ENCODE measurements at regions of chr12 and their contacts with region 1.

Region 1: GRCh38 chr12:52023182-52023975 is 16.6 kb downstream of the TAMALIN start:
- DNase-seq: peak; percentile 76 to 98 (median 85)

Region 2: DNA sequence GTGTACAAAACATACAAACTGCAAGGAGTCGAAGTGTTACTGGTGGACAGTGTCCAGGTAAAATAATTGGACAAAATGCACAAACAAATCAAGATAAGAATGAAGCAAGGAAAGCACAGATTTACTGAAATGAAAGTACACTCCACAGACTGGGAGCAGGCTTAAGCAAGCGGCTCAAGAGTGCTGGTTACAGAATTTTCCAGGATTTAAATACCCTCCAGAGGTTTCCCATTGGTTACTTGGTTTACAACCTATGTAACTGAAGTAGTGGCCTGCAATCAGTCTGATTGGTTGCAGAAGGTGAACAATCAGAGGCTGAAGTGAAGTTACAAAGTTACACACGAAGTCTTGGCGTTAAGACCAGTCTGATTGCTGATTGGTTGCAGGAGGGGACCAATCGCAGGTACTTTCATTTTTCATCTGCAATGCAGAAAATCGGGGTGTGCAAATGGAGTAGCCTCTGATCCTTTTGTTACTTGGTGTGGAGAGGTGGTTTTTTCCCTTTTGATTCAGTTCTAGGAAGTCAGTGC is 444.0 kb before region 1 on chr12:
- intact Hi-C with region 1: no loop called
- DNase-seq: no peak

Region 3: GRCh38 chr12:51994959-51995358 is 28.4 kb before region 1 on chr12:
- intact Hi-C with region 1: loop called (anchors 1 kb)
- DNase-seq: no peak

Region 4: DNA sequence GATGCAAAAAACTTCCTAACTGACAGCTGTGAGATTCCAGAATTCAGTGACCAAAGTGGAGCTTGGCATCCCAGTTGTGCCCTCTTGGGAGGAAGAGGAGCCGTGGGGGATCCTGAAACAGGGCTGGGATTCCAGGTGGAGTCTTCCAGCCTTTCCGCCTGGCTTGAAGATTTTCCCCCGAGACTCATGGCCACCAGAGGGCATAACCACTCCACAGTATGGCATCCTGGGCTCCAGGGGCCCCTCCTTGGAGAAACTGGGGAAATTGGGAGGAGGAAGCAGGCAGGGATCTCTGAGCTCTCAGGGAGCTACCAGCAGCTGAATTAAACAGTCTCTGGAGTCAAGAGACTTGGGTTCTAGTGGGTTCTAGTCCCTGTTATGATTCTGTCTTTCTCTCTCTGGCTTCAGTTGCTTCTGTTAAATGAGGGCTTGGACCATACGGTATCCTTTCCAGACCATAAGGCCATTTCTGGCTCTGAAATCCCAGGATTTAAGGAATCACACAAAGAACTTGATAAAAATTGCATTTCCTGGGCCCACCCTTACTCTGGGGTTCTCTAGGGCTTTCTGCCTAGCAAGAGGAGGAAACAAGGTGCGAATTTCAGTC is 19.2 kb before region 1 on chr12:
- intact Hi-C with region 1: loop called (anchors 1 kb)
- DNase-seq: peak; percentile 60 to 95 (median 79)

Region 5: DNA sequence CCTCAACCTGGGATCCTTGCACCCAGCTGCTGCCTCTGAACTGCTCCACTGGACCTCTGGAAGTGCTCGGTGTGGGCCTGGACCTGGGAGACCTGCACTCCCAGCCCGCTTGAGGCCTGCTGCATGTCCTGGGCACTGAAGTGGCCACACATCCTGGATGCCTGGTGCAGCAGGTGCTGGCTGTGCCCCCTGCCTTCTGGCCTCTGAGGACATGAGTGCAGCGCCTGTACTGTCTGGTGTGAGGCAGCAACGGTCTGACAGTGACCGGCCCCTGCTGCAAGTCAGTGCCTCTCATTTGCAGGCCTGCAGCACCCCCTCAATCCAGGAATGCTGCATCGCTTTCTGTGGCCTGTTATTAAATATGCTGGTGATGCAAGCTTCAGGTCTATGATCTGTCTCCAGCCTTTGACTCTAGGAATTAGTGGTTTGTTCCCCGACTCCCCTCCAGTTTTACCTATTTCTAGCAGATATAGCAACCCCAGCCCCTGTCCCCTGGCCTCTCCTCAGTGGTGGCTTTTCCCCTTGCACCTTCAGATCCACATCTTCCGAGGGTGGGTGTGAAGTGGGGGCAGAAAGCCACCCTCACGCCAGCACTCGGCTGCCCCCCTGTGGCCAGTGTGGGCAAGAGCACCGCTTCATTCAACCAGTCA is 59.7 kb after region 1 on chr12:
- intact Hi-C with region 1: loop called (anchors 1 kb)
- DNase-seq: peak in 8 of 10 donors; percentile 60 to 94 (median 70)

Region 6: DNA sequence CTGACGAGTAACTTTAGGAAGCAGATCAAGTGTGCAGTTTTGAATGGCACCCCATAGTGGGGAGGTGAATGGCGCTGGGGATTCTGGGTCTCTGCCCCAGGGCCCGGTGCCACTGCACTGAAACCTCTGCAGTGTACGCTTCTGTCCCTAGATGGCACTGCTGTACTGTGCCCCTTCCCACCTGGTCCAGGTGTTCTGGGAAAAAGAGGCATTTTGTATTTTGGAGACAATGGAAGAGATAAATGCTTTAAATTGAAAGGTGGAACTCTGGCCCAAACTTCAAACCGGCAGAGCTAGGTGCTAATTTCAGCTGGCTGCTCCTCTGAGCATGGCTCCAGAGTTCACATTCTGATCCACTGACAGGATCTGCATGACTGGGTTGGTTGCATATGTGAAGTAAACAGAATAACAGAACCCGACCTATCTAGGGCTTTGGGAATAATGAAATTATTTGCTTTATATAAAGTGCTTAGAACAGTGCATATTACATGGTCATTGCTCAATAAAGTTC is 116.2 kb after region 1 on chr12:
- intact Hi-C with region 1: no loop called
- DNase-seq: peak in 1 of 10 donors; percentile 67

Measured in posterior cingulate gyrus (tissue), 11 donors.